ENCODE measurements at regions of chr1 and their contacts with region 1.

Region 1: GRCh38 chr1:246641394-246641793 is 75.1 kb downstream of the CNST start:
- DNase-seq: no peak
- H3K4me3 ChIP-seq: no peak overlapping the region
- H3K27ac ChIP-seq: peak overlapping the region; percentile 8 to 68 (median 64)
- H3K4me1 ChIP-seq: peaks cover 2 to 33% (median 23%) of the 10 kb centered on the region in 4 donors
- H3K27me3 ChIP-seq: no peaks in the 10 kb centered on the region
- CTCF ChIP-seq: no peak
- EP300 ChIP-seq: no peak
- POLR2A ChIP-seq: no peak

Region 2: GRCh38 chr1:246506674-246507481 is 134.5 kb before region 1 on chr1 and contains the start of gene SMYD3:
- intact Hi-C with region 1: loop called (anchors 5 kb)
- DNase-seq: peak; percentile 81
- H3K4me3 ChIP-seq: peak within 1 kb of the TSS; percentile 70 to 97 (median 90)
- H3K27ac ChIP-seq: peak within 1 kb of the TSS; percentile 68 to 79 (median 74)
- H3K4me1 ChIP-seq: peaks cover 0 to 14% (median 8%) of the 10 kb centered on the region in 4 donors
- H3K27me3 ChIP-seq: no peaks in the 10 kb centered on the region
- CTCF ChIP-seq: peak in 1 of 4 experiments; percentile 12
- EP300 ChIP-seq: no peak
- POLR2A ChIP-seq: peak in 1 of 2 donors; percentile 23
- total RNA-seq, gene SMYD3: 14.6 to 23.8 (median 17.1) TPM

Region 3: GRCh38 chr1:246809473-246809872 is 168.1 kb after region 1 on chr1:
- intact Hi-C with region 1: no loop called
- DNase-seq: no peak
- H3K4me3 ChIP-seq: no peak overlapping the region
- H3K27ac ChIP-seq: no peak overlapping the region
- H3K4me1 ChIP-seq: no peaks in the 10 kb centered on the region
- H3K27me3 ChIP-seq: no peaks in the 10 kb centered on the region
- CTCF ChIP-seq: no peak
- EP300 ChIP-seq: no peak
- POLR2A ChIP-seq: no peak

Measured in sigmoid colon (tissue), 7 donors.